AG04449 (cell line): ENCODE measurements at regions of chr9 and their contacts with region 1.

Region 1: DNA sequence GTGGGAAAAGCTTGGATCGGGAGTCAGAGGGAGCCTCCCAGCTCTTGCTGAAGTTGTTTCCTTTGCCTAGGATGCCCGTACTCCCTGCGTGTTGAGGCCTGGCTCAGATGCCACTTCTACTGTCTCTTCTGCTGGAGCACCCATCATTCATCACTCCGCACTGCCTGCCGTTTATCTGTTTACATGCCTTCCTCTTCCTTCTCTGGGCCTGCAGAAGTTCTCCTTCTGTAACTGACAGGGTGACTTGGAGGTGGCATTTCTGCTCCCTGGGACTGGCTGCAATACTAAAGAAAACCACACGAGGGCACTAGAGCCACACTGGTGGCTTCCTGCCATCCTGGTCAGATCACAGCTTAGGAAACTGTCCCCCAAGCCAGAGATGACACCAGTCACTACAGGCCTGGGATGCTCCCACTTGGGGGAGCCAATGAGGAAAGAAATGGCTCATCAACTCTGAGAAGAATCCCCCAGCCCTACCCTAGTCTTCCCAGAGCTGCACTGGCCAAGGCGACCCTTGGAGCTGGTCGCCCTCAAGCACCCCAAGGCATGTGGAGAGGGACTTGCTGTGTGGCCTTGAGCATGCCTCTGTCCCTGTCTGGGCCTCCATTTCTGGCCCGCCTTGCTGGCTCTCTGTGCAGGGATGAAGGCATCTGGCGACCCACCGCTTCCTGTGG is 9.7 kb upstream of the SLC25A51 start:
- DNase-seq: no peak
- H3K4me3 ChIP-seq: no peak overlapping the region
- CTCF ChIP-seq: peak; percentile 85

Region 2: DNA sequence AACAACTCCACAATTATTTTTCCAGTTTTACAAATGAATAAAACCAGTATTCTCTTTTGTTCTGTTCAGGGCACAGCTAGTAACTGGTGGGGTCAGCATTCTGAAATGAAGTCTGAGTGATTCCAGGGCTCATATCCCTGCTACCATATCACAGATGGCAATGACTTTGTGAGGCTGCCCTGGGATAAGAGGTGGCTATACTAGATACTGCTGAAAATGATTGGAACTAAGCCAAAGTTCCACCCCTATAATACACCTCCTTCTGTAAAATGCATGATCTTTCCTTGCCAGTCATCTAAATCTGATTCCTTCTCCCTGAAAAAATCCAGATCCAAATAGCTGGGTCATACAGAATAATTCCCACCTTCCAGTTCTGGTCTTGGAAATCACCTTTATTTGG is 24.1 kb before region 1 on chr9:
- CTCF ChIA-PET with region 1: no interaction called
- POLR2A ChIA-PET with region 1: no interaction called
- DNase-seq: no peak
- H3K4me3 ChIP-seq: no peak overlapping the region
- CTCF ChIP-seq: no peak

Region 3: DNA sequence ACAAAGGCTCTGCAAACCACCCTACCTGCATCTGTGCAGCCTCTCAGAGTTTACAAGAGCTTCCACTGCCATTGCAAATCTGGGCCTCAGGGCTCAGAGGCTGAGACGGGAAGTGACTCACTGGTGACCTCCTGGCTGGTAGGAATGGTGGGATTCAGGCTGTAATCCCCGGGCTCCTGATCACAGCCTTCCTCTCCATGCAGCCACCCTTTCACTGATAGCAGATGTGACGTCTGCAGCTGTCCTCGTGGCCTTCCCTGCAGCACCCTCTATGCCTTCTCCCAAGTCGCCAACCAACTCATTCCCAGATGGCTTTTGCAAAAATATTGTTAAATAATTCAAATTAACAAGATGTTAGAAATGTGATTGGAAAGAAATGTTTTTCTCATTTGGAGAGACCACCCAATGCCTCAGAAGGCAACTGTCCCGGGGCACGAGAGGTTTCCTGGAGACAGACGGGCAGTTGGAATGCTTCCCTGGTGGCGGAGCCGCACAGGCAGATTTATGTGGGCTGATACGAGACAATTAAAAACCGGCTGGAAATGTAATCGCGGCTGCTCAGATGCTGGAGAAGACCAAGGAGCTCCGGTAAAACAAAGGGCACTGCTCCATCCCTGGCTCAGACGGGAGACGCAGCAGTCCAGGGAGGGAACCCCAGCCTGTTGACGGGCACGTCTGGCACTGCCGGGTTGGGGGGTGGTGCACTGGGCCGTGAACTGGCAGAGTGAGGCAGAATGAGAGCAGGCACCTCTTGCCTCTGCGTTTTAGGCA is 24.7 kb after region 1 on chr9:
- CTCF ChIA-PET with region 1: interaction called, 37 read pairs
- POLR2A ChIA-PET with region 1: no interaction called
- DNase-seq: no peak
- H3K4me3 ChIP-seq: peak overlapping the region; percentile 18
- CTCF ChIP-seq: no peak

Region 4: GRCh38 chr9:38061326-38061977 is 147.8 kb after region 1 on chr9:
- CTCF ChIA-PET with region 1: interaction called, 37 read pairs
- POLR2A ChIA-PET with region 1: interaction called, 4 read pairs
- DNase-seq: no peak
- H3K4me3 ChIP-seq: no peak overlapping the region
- CTCF ChIP-seq: no peak

Region 5: GRCh38 chr9:38154501-38155421 is 241.1 kb after region 1 on chr9:
- CTCF ChIA-PET with region 1: interaction called, 77 read pairs
- POLR2A ChIA-PET with region 1: no interaction called
- DNase-seq: no peak
- H3K4me3 ChIP-seq: no peak overlapping the region
- CTCF ChIP-seq: no peak

Region 6: GRCh38 chr9:38263532-38263931 is 349.9 kb after region 1 on chr9:
- CTCF ChIA-PET with region 1: interaction called, 58 read pairs
- POLR2A ChIA-PET with region 1: interaction called, 3 read pairs
- DNase-seq: no peak
- H3K4me3 ChIP-seq: no peak overlapping the region
- CTCF ChIP-seq: no peak